ENCODE measurements at regions of chr10 and their contacts with region 1.

Region 1: DNA sequence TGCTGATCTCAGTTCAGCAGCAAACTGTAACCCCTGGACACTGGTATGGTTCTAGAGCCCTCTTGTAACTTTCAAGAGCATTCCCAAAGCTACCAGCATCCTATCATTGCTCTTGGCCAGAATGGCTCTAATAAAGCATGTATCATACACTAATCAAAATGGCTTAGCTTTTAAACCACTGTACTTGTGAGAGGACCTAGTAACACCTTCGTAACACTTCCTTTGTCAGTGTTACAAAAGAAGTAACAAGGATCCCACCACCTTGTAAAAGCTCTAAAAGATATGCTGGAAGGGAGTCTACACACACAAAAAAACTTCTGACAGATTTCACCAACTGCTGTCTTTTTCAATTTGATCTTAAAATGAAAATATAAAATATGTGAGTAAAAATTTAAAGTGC is 144.7 kb downstream of the ALOX5 start:
- DNase-seq: no peak
- ATAC-seq: no peak
- H3K4me3 ChIP-seq: no peak overlapping the region
- H3K27ac ChIP-seq: no peak overlapping the region
- H3K4me1 ChIP-seq: peaks cover 26% of the 10 kb centered on the region
- H3K27me3 ChIP-seq: no peaks in the 10 kb centered on the region
- CTCF ChIP-seq: no peak

Region 2: GRCh38 chr10:45557275-45557905 is 38.6 kb after region 1 on chr10:
- CTCF ChIA-PET with region 1: no interaction called
- POLR2A ChIA-PET with region 1: interaction called, 14 read pairs
- in situ Hi-C with region 1: no loop called
- intact Hi-C with region 1: no loop called
- DNase-seq: no peak
- ATAC-seq: no peak
- H3K4me3 ChIP-seq: no peak overlapping the region
- H3K27ac ChIP-seq: no peak overlapping the region
- H3K4me1 ChIP-seq: peaks cover 18% of the 10 kb centered on the region
- H3K27me3 ChIP-seq: no peaks in the 10 kb centered on the region
- CTCF ChIP-seq: no peak